CD14-positive monocyte (primary cell): ENCODE measurements at regions of chr7 and their contacts with region 1.

Region 1: DNA sequence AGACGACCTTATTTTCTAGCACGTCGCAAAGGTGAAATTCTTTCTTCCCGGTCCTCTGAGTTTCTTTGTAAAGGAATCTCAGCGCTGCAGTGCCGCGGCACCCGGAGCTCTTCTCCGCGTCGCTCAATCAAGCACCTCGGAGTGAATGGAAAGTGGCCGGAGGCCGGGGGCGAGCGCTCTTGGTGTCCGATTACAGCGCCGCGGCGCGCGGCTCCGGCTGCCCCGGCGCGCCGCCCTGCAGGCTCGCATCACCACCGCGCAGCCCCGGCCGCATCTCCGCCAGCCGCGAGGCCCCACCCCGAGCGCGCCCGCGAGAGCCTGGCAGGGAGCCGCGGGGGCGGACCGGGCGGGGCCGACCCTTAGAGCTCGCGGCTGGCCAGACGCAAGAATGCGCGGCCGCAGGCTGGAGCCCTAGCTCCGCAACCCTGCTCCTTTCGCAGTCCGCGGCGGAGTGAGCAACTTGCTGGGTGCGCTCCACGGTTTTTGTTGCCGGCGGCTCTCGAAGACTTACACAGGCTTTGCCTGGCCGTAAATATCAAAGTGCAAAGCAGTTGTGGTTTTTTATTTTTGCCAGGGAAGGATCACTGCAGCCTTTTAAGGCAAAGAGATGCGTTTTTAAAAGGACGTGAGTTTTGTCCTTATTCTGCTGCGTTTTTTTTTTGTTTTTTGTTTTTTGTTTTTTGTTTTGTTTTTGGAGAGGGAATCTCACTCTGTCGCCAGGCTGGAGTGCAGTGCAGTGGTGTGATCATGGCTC is at the start of gene SEMA3C:
- DNase-seq: peak; percentile 73 to 78 (median 77)
- H3K4me3 ChIP-seq: peak within 1 kb of the TSS; percentile 90 to 96 (median 90)
- H3K4me3 Mint-ChIP-seq: peak within 1 kb of the TSS; percentile 85 to 99
- H3K27ac ChIP-seq: peak within 1 kb of the TSS; percentile 73 to 85
- H3K27ac Mint-ChIP-seq: peak within 1 kb of the TSS; percentile 88 to 94 (median 90)
- H3K4me1 ChIP-seq: peaks cover 26 to 48% of the 10 kb centered on the region in 2 donors
- H3K4me1 Mint-ChIP-seq: peaks cover 47% of the 10 kb centered on the region
- H3K27me3 ChIP-seq: no peaks in the 10 kb centered on the region
- H3K27me3 Mint-ChIP-seq: peaks cover 0 to 2% (median 2%) of the 10 kb centered on the region in 3 donors
- CTCF ChIP-seq: no peak
- polyA plus RNA-seq, gene SEMA3C: 7.2 to 14.1 (median 13.7) TPM

Region 2: DNA sequence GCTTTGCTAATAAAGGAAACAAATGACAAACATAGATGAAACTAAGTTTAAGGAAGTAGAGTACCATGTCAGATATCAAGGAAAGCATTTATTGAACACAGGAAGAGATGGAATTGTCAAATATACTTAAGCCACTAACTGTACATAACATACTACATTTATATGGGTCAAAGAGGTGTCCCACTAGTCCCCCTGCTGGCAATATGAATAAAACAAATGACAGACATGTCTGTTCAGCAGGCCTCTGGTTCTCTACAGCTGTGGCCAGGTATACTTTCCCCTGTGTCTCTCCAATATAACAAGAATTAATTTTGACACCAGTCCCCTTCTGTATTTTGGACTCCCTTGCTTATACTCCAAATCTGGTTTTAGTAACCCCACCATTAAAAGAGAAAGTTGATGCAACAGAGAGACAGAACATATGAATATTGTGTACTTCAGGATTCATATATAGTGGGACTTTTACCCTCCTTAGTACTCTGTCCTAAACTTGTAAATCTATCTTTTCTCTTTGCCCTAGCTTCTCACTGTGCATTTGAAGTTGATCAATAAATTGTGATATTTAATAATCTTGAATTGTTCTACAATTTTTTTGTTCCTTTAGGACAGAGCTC is 237.7 kb before region 1 on chr7:
- intact Hi-C with region 1: loop called in 1 of 2 experiments (anchors 10 kb)
- DNase-seq: peak in 2 of 3 donors; percentile 10 to 17
- H3K4me3 ChIP-seq: no peak overlapping the region
- H3K4me3 Mint-ChIP-seq: no peak overlapping the region
- H3K27ac ChIP-seq: peak overlapping the region in 1 of 2 donors; percentile 58
- H3K27ac Mint-ChIP-seq: peak overlapping the region in 5 of 7 donors; percentile 31 to 91 (median 73)
- H3K4me1 ChIP-seq: peaks cover 7 to 13% of the 10 kb centered on the region in 2 donors
- H3K4me1 Mint-ChIP-seq: peaks cover 26% of the 10 kb centered on the region
- H3K27me3 ChIP-seq: no peaks in the 10 kb centered on the region
- H3K27me3 Mint-ChIP-seq: no peaks in the 10 kb centered on the region
- CTCF ChIP-seq: peak; percentile 60